Cardiac septum (tissue), 1 donor: ENCODE measurements at regions of chr2 and their contacts with region 1.

Region 1: DNA sequence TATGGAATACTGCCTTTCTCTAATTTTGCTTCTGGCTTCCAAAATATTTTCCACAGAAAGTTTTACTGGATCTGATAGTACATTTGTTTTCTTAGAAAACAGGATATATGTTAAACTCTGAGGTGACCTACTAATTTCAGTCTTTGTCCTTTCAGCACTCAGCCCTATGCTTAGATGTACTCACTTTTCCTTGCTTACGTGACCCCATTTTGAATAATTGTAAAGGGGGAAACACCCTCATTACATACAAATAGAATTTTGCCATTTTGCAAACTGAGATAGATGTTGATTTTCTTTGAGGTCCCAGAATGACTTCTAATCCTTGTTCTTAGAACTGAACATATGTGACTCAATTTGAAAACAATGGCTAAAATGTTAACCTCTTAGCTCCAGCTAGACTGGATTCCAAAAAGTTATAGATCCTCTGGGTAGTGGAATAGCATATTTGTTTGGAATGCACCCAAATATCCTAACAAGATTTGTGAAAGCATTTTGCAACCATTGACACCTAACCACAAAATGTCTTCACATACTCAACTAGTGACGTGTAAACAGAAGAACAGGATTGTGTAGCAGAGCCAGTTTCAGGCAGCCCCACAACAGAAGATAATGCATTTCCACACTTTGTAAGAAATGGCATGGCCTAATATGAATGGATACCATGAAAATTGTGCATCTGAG is 44.8 kb upstream of the EHBP1 start:
- DNase-seq: no peak

Region 2: GRCh38 chr2:62596061-62596921 is 64.4 kb before region 1 on chr2:
- intact Hi-C with region 1: loop called (anchors 10 kb)
- DNase-seq: no peak